Panc1 (cell line): ENCODE measurements at regions of chr17 and their contacts with region 1.

Region 1: DNA sequence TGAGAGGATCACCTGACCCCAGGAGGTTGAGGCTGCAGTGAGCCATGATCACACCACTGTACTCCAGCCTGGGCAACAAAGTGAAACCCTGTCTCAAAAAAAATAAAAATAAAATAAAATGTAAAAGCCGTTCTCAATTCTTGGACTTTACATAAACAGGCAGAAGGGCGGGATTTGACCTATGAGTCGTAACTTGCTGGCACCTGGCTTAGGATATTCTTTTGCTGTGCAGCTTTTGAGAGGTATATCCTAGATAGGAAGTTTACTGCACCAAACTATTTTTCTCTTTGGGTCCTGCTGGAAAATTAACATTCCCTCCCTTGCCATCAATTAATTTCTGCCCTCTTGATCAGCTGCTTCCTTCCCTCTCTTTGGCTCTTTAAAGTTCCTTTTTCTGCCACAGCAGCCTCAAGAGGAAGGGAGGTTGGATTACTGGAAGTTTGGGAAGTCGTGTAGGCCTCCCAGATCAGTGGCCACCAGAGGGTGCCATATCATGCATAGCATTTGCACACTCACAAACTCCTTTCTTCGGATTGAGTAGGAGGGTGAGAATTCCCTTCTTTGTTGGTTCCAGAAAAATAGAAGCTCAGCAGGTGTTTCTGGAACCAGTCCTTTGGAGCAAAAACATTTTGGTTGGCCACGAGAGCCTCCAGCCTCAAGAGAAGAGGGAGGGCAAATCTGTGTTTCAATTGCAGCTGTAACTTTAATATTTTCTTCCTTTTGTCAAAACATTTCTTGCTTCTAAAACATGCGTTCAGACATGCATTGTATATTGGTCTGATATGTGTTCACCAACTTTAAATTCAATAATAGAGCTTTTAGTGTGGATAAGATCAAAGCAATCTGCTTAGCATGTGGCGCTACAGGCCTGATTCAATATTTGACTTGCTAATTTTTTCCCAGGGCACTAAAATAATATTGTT is 147.3 kb downstream of the CCDC182 start:
- DNase-seq: peak; percentile 32
- ATAC-seq: peak; percentile 89
- H3K4me3 ChIP-seq: no peak overlapping the region
- H3K27ac ChIP-seq: no peak overlapping the region
- H3K4me1 ChIP-seq: no peaks in the 10 kb centered on the region
- H3K27me3 ChIP-seq: no peaks in the 10 kb centered on the region
- CTCF ChIP-seq: peak; percentile 95

Region 2: GRCh38 chr17:57130761-57131461 is 466.9 kb before region 1 on chr17:
- CTCF ChIA-PET with region 1: no interaction called
- POLR2A ChIA-PET with region 1: no interaction called
- in situ Hi-C with region 1: no loop called
- intact Hi-C with region 1: loop called (anchors 10 kb)
- DNase-seq: peak; percentile 56
- ATAC-seq: peak; percentile 96
- H3K4me3 ChIP-seq: peak overlapping the region; percentile 19 to 51; a peak in 3 of 4 replicates
- H3K27ac ChIP-seq: no peak overlapping the region
- H3K4me1 ChIP-seq: peaks cover 6% of the 10 kb centered on the region
- H3K27me3 ChIP-seq: no peaks in the 10 kb centered on the region
- CTCF ChIP-seq: peak; percentile 94

Region 3: GRCh38 chr17:57518587-57519581 is 78.9 kb before region 1 on chr17:
- CTCF ChIA-PET with region 1: no interaction called
- POLR2A ChIA-PET with region 1: no interaction called
- in situ Hi-C with region 1: no loop called
- intact Hi-C with region 1: no loop called
- DNase-seq: no peak
- ATAC-seq: peak; percentile 31
- H3K4me3 ChIP-seq: no peak overlapping the region
- H3K27ac ChIP-seq: no peak overlapping the region
- H3K4me1 ChIP-seq: no peaks in the 10 kb centered on the region
- H3K27me3 ChIP-seq: no peaks in the 10 kb centered on the region
- CTCF ChIP-seq: no peak

Region 4: DNA sequence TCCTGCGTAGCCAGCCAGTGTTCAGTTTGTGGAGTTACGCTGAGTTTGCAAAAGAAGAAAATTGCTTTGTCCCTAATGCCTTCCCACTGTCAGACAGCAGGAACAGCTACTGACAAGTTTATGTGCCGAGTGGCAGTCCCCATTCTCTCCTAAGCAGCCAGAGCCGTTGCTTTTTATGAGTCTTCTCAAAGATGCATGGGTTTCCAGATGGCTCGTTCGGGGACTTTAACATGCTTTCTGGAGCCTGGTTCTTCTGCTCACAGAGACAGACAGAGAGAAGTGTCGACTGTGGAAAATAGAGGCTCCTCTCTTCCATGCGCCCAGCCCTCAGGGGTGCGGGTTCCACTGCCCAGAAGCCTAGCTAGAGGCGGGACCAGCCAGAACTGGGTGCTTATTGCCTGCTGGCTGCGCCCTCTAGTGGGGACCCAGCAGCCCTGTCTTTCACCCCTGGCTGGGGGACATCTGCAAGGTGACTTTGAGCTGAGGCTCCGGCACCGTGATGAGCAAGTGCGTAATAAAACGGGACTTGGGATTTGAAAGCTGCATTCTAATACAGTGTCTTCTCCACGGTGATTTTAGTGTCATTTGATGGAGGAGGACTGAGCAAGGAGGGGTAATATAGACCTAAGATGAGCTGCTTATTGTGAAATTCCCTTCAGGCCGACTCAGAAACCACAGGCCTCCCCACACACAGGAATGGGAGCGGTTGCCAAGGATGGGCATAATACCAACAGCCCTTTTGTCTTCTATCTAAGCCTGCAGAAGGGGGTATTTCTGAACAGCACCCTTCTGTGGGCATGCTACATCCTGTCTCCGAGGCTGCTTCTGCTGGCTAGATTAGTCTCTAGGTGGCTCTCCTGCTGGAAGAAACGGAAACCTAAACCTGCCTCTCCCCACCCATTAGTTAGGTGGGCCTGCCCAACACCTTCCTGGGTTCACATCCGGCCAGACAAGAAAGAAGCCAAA is 74.2 kb after region 1 on chr17:
- CTCF ChIA-PET with region 1: interaction called, 20 read pairs
- POLR2A ChIA-PET with region 1: no interaction called
- in situ Hi-C with region 1: no loop called
- intact Hi-C with region 1: loop called (anchors 2 kb)
- DNase-seq: peak; percentile 50
- ATAC-seq: peak; percentile 96
- H3K4me3 ChIP-seq: no peak overlapping the region
- H3K27ac ChIP-seq: no peak overlapping the region
- H3K4me1 ChIP-seq: 0 out of 2 replicates have a peak, but pooled peaks cover 5% of the 10 kb centered on the region
- H3K27me3 ChIP-seq: no peaks in the 10 kb centered on the region
- CTCF ChIP-seq: peak; percentile 98

Region 5: DNA sequence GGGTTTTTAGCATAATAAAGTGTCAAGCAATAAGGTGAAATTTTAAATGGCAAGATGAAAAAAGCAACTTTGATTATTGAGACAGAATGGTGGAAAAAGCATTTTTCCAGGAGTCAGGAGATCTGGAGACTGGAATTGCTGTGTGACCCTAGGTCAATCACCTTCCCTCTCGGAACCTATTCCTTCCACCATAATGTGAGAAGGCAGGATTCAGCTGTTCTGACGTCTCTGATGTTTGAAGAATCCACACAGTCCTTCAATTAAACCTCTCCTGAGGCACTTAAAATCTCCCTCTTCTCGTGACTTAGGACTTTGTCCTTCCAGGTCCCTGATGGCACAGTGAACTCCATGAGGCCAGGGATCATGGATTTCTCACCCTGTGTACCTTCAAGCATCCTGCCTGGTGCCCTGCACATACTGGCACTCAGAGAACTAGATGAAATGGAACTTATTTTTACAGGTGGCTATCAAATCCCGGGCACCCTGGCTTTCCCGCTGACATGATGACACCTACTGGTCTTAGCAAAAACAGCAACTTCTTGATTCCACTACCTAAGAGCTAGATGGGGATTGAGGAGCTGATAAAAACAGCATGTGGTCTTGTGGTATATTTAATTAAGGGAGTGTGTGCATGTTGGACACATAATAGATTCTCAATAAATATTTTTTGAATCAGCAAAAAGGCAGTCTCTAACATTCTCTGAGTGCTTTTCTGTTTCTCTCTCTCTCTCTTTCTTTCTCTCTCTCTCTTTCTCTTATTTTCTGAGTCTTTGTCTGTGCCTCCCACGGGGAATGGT is 149.6 kb after region 1 on chr17:
- CTCF ChIA-PET with region 1: interaction called, 7 read pairs
- POLR2A ChIA-PET with region 1: no interaction called
- in situ Hi-C with region 1: no loop called
- intact Hi-C with region 1: loop called (anchors 2 kb)
- DNase-seq: peak; percentile 52
- ATAC-seq: peak; percentile 84
- H3K4me3 ChIP-seq: no peak overlapping the region
- H3K27ac ChIP-seq: no peak overlapping the region
- H3K4me1 ChIP-seq: no peaks in the 10 kb centered on the region
- H3K27me3 ChIP-seq: peaks cover 20% of the 10 kb centered on the region
- CTCF ChIP-seq: peak; percentile 91

Region 6: GRCh38 chr17:58112970-58113631 is 515.3 kb after region 1 on chr17:
- CTCF ChIA-PET with region 1: no interaction called
- POLR2A ChIA-PET with region 1: no interaction called
- in situ Hi-C with region 1: no loop called
- intact Hi-C with region 1: loop called (anchors 10 kb)
- DNase-seq: peak; percentile 70
- ATAC-seq: peak; percentile 88
- H3K4me3 ChIP-seq: no peak overlapping the region
- H3K27ac ChIP-seq: no peak overlapping the region
- H3K4me1 ChIP-seq: no peaks in the 10 kb centered on the region
- H3K27me3 ChIP-seq: no peaks in the 10 kb centered on the region
- CTCF ChIP-seq: peak; percentile 97